ENCODE measurements at regions of chr4 and their contacts with region 1.

Region 1: GRCh38 chr4:186037692-186038658 is 31.0 kb upstream of the TLR3 start:
- DNase-seq: peak; percentile 61
- H3K4me3 ChIP-seq: no peak overlapping the region
- H3K27ac ChIP-seq: no peak overlapping the region
- H3K4me1 ChIP-seq: peaks cover 0 to 5% of the 10 kb centered on the region in 2 experiments; a peak in 1 of 4 replicates
- H3K27me3 ChIP-seq: no peaks in the 10 kb centered on the region
- CTCF ChIP-seq: peak; percentile 80
- EP300 ChIP-seq: no peak
- RAD21 ChIP-seq: peak; percentile 91

Region 2: DNA sequence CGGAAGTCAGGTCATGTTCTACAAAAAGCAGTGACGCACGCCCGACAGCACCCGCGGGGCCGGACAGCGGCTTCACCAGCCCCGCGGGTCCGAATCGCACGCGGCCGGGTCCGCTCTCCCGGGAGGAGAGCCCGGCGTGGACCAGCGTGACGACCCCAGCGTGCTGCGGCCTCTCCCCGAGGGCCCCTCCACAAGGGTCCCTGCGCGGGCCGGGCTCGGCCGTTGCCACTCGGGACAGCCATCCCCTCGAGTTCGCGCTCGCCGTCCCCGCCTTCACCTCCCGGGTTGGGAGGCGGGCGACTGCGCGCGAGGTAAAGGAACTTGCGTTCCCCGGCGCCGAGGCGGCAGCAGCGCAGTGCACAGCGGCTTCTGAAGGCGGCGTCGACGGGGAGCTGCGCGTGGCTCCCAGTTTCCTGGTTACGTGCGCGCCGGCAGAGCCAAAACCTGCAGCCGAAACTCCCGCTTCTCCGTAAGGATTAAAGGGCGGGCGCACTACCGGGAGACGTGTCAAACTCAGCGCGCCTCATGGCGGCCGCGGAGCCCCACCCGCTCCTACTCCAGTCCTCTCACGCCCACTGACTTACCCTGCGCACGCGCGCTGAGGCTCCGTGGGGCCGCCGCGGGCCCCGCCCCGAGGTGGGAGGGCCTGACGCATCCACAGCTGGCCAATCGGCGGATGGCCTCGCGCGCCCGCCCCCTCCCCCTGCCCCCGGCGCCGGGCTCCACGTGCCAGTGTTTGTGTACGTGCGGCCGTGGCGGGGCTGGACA is 641.8 kb before region 1 on chr4:
- CTCF ChIA-PET with region 1: interaction called, 19 read pairs
- POLR2A ChIA-PET with region 1: no interaction called
- DNase-seq: peak; percentile 99
- H3K4me3 ChIP-seq: peak overlapping the region; percentile 74 to 78
- H3K27ac ChIP-seq: peak overlapping the region; percentile 94 to 98
- H3K4me1 ChIP-seq: peaks cover 6 to 8% of the 10 kb centered on the region in 2 experiments; a peak in 3 of 4 replicates
- H3K27me3 ChIP-seq: no peaks in the 10 kb centered on the region
- CTCF ChIP-seq: no peak
- EP300 ChIP-seq: 0 out of 4 replicates have a peak, but pooled peaks of 1 of the 2 experiments have one; percentile 6
- RAD21 ChIP-seq: no peak

Region 3: DNA sequence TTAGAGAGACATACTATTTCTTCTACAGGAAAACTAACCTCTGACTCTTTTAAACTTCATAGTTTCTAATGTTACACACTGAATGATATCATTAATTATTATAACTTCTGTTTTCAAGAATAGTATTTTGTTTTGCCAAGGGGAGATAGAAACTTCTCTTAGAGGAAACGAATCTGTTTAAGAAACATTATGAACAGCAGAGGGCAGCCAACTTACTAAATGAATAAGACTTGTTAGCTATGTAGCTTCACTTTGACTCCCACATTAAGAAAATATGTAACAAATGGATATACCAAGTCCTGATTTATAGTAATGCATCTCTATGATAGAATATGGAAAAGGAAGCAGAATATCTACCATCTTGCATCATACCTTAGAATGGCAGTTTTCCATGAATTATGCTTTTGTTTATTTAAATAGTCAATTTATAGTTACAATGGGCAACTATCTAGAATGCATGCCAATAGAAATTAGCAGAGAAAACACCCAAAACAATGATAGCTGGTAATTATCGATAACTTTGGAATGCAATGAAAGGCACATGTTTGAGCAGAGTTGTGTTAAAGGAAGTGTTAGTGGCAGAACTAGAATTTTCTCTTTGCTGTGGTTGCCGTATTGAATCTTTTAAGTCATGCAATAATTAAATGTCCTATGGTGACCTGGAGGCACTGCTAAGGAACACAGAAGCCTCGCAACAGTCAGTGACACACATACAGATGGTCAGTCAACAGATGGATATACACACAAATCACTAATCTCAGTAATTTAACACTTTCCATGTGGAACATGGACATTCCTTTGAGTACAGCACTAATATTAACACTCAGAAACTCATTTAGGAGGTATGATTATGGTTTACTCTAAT is 396.9 kb before region 1 on chr4:
- CTCF ChIA-PET with region 1: interaction called, 53 read pairs
- POLR2A ChIA-PET with region 1: no interaction called
- DNase-seq: peak; percentile 50
- H3K4me3 ChIP-seq: no peak overlapping the region
- H3K27ac ChIP-seq: peak overlapping the region in 1 of 2 experiments; percentile 53; a peak in 2 of 4 replicates
- H3K4me1 ChIP-seq: peaks cover 0 to 25% of the 10 kb centered on the region in 2 experiments; a peak in 2 of 4 replicates
- H3K27me3 ChIP-seq: no peaks in the 10 kb centered on the region
- CTCF ChIP-seq: peak; percentile 72
- EP300 ChIP-seq: no peak
- RAD21 ChIP-seq: peak; percentile 75

Region 4: GRCh38 chr4:186067757-186068385 is 29.9 kb after region 1 on chr4:
- CTCF ChIA-PET with region 1: interaction called, 12 read pairs
- POLR2A ChIA-PET with region 1: no interaction called
- DNase-seq: peak; percentile 31
- H3K4me3 ChIP-seq: no peak overlapping the region; a peak in 1 of 4 replicates
- H3K27ac ChIP-seq: no peak overlapping the region
- H3K4me1 ChIP-seq: peaks cover 2 to 6% of the 10 kb centered on the region in 2 experiments; a peak in 2 of 4 replicates
- H3K27me3 ChIP-seq: no peaks in the 10 kb centered on the region
- CTCF ChIP-seq: peak; percentile 28; the same call in 1 of the 2 replicates
- EP300 ChIP-seq: no peak
- RAD21 ChIP-seq: peak; percentile 63

Region 5: GRCh38 chr4:186137196-186137794 is 99.3 kb after region 1 on chr4:
- CTCF ChIA-PET with region 1: interaction called, 17 read pairs
- POLR2A ChIA-PET with region 1: no interaction called
- DNase-seq: peak; percentile 55
- H3K4me3 ChIP-seq: no peak overlapping the region
- H3K27ac ChIP-seq: no peak overlapping the region
- H3K4me1 ChIP-seq: peaks cover 0 to 2% of the 10 kb centered on the region in 2 experiments; a peak in 1 of 4 replicates
- H3K27me3 ChIP-seq: no peaks in the 10 kb centered on the region; the same call in 1 of the 2 replicates
- CTCF ChIP-seq: peak; percentile 72
- EP300 ChIP-seq: no peak
- RAD21 ChIP-seq: peak; percentile 79